ENCODE measurements at regions of chr5 and their contacts with region 1.

Region 1: GRCh38 chr5:10689391-10690081 is 71.5 kb downstream of the DAP start:
- DNase-seq: peak; percentile 34
- H3K4me3 Mint-ChIP-seq: no peak overlapping the region
- H3K27ac Mint-ChIP-seq: no peak overlapping the region
- H3K4me1 Mint-ChIP-seq: peaks cover 7% of the 10 kb centered on the region
- H3K27me3 Mint-ChIP-seq: no peaks in the 10 kb centered on the region
- CTCF ChIP-seq: no peak

Region 2: GRCh38 chr5:10892147-10892861 is 202.8 kb after region 1 on chr5:
- CTCF ChIA-PET with region 1: no interaction called
- intact Hi-C with region 1: no loop called
- DNase-seq: no peak
- H3K4me3 Mint-ChIP-seq: no peak overlapping the region
- H3K27ac Mint-ChIP-seq: no peak overlapping the region
- H3K4me1 Mint-ChIP-seq: no peaks in the 10 kb centered on the region
- H3K27me3 Mint-ChIP-seq: no peaks in the 10 kb centered on the region
- CTCF ChIP-seq: no peak

Region 3: DNA sequence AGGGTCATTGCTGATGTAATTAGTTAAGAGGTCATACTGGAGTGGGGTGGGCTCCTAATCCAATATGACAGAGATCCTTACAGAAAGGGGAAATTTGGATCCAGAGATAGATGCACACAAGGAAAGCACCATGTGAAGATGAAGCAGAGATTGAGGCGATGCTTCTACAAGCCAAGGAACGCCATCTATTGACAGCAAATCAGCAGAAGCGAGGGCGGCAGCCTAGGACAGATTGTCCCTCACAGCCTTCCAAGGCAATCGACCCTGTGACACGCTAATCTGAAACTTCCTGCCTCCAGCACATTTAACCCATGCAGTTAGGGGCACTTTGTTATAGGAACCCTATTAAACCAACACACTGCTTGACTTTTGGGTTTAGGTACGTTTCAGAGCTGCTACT is 356.6 kb after region 1 on chr5:
- CTCF ChIA-PET with region 1: no interaction called
- intact Hi-C with region 1: loop called (anchors 5 kb)
- DNase-seq: no peak
- H3K4me3 Mint-ChIP-seq: no peak overlapping the region
- H3K27ac Mint-ChIP-seq: no peak overlapping the region
- H3K4me1 Mint-ChIP-seq: peaks cover 5% of the 10 kb centered on the region
- H3K27me3 Mint-ChIP-seq: no peaks in the 10 kb centered on the region
- CTCF ChIP-seq: no peak